ENCODE measurements at regions of chr9 and their contacts with region 1.

Region 1: DNA sequence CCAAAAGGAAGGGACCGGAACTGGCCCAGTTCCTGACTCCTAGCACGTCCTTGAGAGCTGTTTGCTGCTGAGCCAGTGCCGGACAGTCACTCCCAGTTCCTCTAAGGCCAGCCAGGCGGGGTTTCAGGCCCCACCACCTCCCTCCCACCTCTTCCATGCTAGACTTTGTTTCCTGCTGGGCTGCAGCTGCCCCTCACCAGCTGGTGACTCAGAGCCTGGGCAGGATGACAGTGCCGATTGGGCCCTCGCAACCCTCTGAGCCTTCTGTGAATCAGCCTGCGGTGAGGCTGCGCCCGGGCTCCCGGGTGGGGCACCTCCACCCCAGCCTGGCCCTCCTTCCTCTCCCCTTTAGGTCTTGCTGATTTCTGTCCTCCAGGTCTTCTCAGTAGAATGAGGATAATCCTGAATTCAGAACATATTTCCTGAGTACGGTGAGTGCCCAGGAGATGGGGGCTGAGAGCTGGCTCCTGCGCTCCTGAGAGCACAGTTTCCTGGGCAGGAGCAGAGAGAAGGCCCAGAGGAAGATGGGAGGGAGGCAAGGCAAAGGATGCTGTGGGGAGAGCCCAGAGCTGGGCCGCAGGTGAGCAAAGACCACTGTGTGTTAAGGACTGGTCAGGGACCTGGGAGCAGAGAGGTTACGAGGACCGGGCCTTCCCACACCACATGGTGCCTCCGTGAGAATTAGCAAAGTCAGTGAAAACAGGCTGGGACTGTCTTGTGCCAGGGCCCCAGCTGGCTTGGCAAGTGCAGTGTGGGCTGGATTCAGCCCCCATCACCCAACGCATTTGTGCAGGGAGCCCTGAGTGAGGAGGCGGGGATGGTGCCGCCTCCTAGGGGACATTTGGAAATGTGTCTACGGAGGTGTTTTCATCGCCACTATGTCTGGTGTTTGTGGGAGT is 32.9 kb upstream of the STXBP1 start:
- DNase-seq: peak; percentile 50
- ATAC-seq: peak; percentile 75
- H3K4me3 Mint-ChIP-seq: no peak overlapping the region
- H3K27ac Mint-ChIP-seq: 0 out of 2 replicates have a peak overlapping the region, but pooled peaks have one; percentile 48
- H3K4me1 Mint-ChIP-seq: peaks cover 16% of the 10 kb centered on the region
- H3K27me3 Mint-ChIP-seq: no peaks in the 10 kb centered on the region
- CTCF ChIP-seq: no peak

Region 2: DNA sequence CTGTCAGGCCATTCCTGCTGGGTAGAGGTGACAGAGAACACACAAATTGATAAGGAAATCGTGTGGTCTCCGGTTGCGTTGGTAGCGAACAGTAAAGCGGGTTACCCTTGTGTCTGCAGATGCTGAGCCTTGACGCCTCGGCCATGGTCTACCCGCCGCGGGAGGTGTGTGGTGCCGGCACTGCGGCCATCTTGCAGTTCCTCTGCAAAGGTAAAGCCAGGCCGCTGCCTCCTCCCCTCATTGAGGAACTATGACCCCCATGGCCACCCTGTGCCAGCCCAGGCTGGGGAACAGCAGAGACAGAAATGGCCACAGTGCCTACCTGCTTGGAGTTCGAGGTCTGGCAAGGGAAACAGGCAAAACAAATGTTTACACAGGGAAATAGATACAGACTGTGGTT is 111.6 kb before region 1 on chr9:
- CTCF ChIA-PET with region 1: no interaction called
- POLR2A ChIA-PET with region 1: no interaction called
- DNase-seq: no peak
- ATAC-seq: no peak
- H3K4me3 Mint-ChIP-seq: no peak overlapping the region
- H3K27ac Mint-ChIP-seq: no peak overlapping the region
- H3K4me1 Mint-ChIP-seq: 0 out of 2 replicates have a peak, but pooled peaks cover 4% of the 10 kb centered on the region
- H3K27me3 Mint-ChIP-seq: no peaks in the 10 kb centered on the region
- CTCF ChIP-seq: no peak

Region 3: GRCh38 chr9:127537792-127538191 is 41.4 kb before region 1 on chr9:
- CTCF ChIA-PET with region 1: interaction called, 28 read pairs
- POLR2A ChIA-PET with region 1: interaction called, 4 read pairs
- DNase-seq: peak; percentile 48
- ATAC-seq: peak; percentile 87
- H3K4me3 Mint-ChIP-seq: no peak overlapping the region
- H3K27ac Mint-ChIP-seq: no peak overlapping the region
- H3K4me1 Mint-ChIP-seq: peaks cover 15% of the 10 kb centered on the region
- H3K27me3 Mint-ChIP-seq: no peaks in the 10 kb centered on the region
- CTCF ChIP-seq: no peak